ENCODE measurements at regions of chr7 and their contacts with region 1.

Region 1: DNA sequence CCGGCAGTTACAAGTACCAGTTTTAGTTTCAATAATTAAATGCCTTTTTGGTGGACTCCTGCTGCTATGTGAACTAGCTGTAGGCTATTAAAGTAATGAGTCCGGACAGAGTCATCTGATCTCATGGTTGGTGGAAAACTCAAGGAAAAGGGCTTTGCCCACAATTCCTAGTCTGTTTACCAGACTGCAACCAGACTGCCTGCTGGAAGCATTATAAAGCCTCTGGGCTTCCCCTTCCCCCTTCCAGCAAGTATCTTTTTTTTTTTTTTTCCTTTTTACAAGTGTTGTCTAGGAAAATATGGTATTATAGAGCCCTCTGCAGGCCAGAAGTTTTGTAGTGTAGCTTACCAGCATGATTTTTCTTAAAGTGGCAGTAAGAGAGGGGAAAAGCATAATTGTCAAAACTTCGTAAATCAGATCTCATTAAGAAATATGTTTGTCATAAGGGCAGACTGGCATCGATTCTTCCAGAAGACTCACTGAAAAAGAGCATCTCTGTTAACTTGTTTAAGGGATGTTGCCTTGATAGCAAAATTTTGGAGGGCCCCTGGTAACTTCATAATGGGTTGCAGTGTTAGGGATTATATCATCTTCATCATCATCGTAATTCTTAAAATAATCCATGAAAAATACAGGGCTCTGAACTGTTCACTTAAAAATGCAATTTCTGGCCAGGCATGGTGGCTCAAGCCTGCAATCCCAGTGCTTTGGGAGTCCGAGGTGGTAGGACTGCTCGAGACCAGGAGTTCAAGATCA is 181.3 kb downstream of the TAX1BP1 start:
- DNase-seq: no peak
- ATAC-seq: peak; percentile 42
- H3K4me3 Mint-ChIP-seq: no peak overlapping the region
- H3K27ac Mint-ChIP-seq: no peak overlapping the region
- H3K4me1 Mint-ChIP-seq: peaks cover 72% of the 10 kb centered on the region
- H3K27me3 Mint-ChIP-seq: no peaks in the 10 kb centered on the region
- CTCF ChIP-seq: no peak

Region 2: GRCh38 chr7:27210441-27211083 is 710.7 kb before region 1 on chr7:
- CTCF ChIA-PET with region 1: interaction called, 26 read pairs
- POLR2A ChIA-PET with region 1: no interaction called
- intact Hi-C with region 1: loop called (anchors 2 kb)
- DNase-seq: no peak
- ATAC-seq: peak; percentile 49
- H3K4me3 Mint-ChIP-seq: peak overlapping the region; percentile 64
- H3K27ac Mint-ChIP-seq: no peak overlapping the region
- H3K4me1 Mint-ChIP-seq: peaks cover 14% of the 10 kb centered on the region
- H3K27me3 Mint-ChIP-seq: peaks cover 75% of the 10 kb centered on the region
- CTCF ChIP-seq: no peak

Region 3: DNA sequence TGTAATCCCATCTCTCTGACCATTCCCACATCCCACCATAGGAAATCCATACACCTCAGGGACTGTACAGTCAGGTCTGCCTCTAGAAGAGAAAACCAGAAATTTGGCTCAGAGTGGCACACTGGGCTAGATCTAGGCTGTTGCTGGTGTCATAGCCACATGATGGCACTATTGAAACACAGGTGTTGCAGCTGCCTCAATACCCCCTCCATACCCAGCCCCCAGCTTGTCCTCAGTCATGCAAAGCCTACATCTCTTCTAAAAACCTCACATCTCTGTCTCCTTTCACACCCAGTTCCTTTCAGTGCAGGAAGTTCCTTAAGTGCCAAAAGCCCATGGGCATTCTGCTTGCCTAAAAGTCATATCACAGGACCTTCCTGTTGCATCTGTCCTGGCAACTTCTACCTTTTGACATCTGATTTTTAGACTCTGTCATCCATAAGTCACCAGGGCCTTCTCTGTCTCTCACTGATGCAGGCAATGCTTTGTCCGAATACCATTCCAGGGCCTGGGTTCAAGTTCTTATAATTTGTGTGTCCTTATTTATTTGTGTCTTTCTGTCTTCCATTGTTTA is 231.6 kb before region 1 on chr7:
- CTCF ChIA-PET with region 1: no interaction called
- POLR2A ChIA-PET with region 1: no interaction called
- intact Hi-C with region 1: loop called (anchors 2 kb)
- DNase-seq: no peak
- ATAC-seq: peak; percentile 62
- H3K4me3 Mint-ChIP-seq: no peak overlapping the region
- H3K27ac Mint-ChIP-seq: no peak overlapping the region
- H3K4me1 Mint-ChIP-seq: peaks cover 3% of the 10 kb centered on the region
- H3K27me3 Mint-ChIP-seq: no peaks in the 10 kb centered on the region
- CTCF ChIP-seq: no peak

Region 4: GRCh38 chr7:27784393-27785053 is 136.7 kb before region 1 on chr7:
- CTCF ChIA-PET with region 1: interaction called, 3 read pairs
- POLR2A ChIA-PET with region 1: no interaction called
- intact Hi-C with region 1: loop called (anchors 2 kb)
- DNase-seq: no peak
- ATAC-seq: peak; percentile 40
- H3K4me3 Mint-ChIP-seq: no peak overlapping the region
- H3K27ac Mint-ChIP-seq: no peak overlapping the region
- H3K4me1 Mint-ChIP-seq: peaks cover 3% of the 10 kb centered on the region
- H3K27me3 Mint-ChIP-seq: no peaks in the 10 kb centered on the region
- CTCF ChIP-seq: no peak

Region 5: DNA sequence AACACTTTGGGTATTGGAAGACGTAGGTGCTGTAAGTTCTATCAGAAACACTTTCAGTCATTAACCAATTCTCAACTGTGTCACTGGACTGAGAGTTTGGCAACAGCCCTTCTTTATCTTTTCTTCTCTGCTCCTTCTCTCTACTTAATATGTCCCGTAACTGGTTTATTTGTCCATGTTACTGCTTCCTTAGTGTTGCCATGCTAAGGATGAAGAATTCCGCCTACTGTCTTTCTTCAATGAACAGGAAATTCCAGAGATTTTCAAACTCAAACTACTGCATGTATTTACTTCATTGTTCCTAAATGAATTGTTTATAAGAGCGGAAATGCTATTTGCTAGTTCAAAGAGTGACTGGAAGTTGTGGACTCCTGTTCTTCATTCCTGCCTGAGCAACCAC is 37.6 kb before region 1 on chr7:
- CTCF ChIA-PET with region 1: interaction called, 4 read pairs
- POLR2A ChIA-PET with region 1: no interaction called
- intact Hi-C with region 1: loop called (anchors 5 kb)
- DNase-seq: no peak
- ATAC-seq: no peak
- H3K4me3 Mint-ChIP-seq: no peak overlapping the region
- H3K27ac Mint-ChIP-seq: no peak overlapping the region
- H3K4me1 Mint-ChIP-seq: no peaks in the 10 kb centered on the region
- H3K27me3 Mint-ChIP-seq: no peaks in the 10 kb centered on the region
- CTCF ChIP-seq: no peak

Region 6: DNA sequence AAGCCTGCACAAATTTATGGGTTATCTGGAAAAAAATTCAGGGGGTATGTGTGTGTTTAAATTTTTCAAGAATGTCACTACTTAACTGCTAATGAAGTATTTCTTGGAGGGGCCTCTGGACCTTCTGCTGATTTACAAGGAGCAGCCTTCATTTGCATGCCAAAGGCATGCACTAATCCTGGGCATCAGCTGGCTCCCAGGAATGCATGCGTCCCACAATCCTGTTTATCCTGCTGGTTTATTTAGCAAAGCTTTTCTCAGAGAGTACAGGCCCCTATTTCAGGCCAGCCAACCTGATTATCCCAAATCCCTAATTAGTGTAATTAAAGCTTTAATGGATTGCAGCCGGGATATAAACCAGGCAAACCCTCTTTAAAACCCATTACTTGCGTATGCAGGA is 10.9 kb before region 1 on chr7:
- CTCF ChIA-PET with region 1: interaction called, 14 read pairs
- POLR2A ChIA-PET with region 1: interaction called, 4 read pairs
- intact Hi-C with region 1: loop called (anchors 1 kb)
- DNase-seq: no peak
- ATAC-seq: no peak
- H3K4me3 Mint-ChIP-seq: no peak overlapping the region
- H3K27ac Mint-ChIP-seq: no peak overlapping the region
- H3K4me1 Mint-ChIP-seq: peaks cover 31% of the 10 kb centered on the region
- H3K27me3 Mint-ChIP-seq: no peaks in the 10 kb centered on the region
- CTCF ChIP-seq: no peak

Region 7: DNA sequence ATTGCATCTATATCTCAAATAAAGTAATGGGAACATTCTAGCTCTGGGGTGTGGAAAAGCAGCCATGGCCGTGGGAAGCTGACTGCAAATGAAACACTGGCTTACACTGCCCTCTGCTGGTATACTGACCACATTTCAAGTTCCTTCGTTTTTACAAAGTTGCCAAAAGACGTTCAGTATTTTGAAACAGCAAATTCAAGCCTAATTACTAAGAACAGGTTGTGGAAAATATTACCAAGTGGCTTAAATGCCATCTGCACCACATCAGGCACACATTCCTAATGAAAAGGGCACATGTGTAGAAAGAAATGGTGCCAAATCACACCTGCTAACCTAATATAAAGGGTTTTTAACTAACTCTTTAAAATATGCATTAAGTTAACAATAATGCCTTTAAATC is 175.5 kb after region 1 on chr7:
- CTCF ChIA-PET with region 1: no interaction called
- POLR2A ChIA-PET with region 1: no interaction called
- intact Hi-C with region 1: loop called (anchors 5 kb)
- DNase-seq: no peak
- ATAC-seq: no peak
- H3K4me3 Mint-ChIP-seq: no peak overlapping the region
- H3K27ac Mint-ChIP-seq: no peak overlapping the region
- H3K4me1 Mint-ChIP-seq: peaks cover 40% of the 10 kb centered on the region
- H3K27me3 Mint-ChIP-seq: no peaks in the 10 kb centered on the region
- CTCF ChIP-seq: peak; percentile 50